CD4-positive, alpha-beta T cell (primary cell): ENCODE measurements at regions of chr12 and their contacts with region 1.

Region 1: DNA sequence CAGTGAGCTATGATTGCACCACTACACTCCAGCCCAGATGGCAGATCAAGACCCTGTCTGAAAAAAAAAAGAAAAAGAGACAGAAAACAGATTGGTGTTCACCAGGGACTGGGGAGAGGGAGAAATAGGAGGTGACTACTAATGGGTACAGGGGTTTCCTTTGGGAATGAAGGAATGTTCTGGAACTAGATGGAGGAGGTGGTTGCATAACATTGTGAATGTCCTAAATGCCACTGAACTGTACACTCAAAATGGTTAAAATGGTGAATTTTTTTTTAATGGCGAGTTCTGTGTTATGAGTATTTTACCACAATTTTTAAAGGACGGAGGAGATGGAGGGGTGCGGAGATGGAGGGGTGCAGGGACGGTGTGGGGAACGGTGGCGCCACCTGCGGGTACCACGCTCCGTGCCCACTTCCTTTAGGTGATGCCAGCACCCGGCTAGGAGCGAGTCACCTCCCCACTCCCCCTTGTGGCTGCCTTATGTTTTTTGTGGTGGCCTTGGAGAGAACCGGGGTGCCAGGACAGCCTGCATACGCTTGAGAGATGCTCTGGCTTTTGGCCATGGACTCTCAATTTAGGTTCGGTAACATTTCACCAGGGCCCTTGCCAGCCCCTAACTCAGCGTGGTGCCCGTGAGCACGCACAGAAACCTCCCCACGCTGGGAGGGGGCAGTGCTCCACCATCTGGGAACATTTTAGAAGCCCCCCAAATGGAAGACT is 16.1 kb downstream of the UBC start:
- DNase-seq: peak; percentile 49 to 89 (median 66)
- ATAC-seq: peak; percentile 100
- H3K4me3 ChIP-seq: no peak overlapping the region
- H3K4me3 Mint-ChIP-seq: peak overlapping the region; percentile 35
- H3K27ac ChIP-seq: no peak overlapping the region
- H3K27ac Mint-ChIP-seq: no peak overlapping the region
- H3K4me1 ChIP-seq: peaks cover 5% of the 10 kb centered on the region
- H3K4me1 Mint-ChIP-seq: peaks cover 12% of the 10 kb centered on the region
- H3K27me3 ChIP-seq: no peaks in the 10 kb centered on the region
- H3K27me3 Mint-ChIP-seq: no peaks in the 10 kb centered on the region
- CTCF ChIP-seq: peak; percentile 80

Region 2: DNA sequence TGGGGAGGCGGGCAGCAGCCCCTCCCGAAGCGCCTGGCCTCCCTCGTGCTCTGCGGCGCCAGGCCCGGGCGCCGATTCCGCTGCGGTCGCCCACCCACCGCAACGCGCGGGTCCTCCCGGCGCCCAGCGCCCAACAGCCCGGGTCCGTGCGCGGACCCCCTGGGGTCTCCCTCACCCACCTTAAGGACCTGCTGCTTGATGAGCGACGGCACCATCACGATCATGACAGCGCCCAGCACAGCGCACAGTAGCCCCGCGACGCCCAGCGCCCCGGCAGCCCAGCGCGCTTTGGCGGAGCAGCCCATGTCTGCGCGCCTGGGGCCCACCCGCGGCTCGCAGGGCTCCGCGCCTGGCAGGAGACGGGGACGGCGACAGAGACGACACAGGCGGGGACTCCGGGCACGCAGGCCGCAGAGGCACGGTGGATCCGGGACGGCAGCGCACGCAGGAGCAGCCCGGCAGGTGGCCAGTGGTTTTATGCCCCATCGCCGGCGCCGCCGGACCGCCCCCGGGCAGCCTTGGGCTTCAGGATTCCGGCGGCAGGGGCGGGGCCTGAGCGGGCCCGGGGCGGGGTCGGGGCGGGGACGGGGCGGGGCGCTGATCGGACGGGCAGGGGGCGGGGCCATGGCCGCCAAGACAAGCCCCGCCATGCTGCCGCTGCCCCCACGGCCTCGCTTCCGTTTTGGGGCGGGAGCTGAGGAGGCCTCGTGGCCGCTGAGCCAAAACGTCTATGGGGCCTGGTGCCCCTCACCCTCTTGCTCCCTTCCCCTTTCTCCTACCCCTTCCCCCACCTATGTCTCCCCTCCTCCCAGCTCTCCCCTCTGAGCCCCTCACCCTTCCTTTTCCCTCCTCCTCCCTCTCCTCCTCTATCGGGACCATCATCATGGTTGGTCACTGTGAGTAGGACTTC is 34.7 kb before region 1 on chr12 and contains the start of gene SCARB1:
- CTCF ChIA-PET with region 1: no interaction called
- POLR2A ChIA-PET with region 1: no interaction called
- intact Hi-C with region 1: loop called in 1 of 2 experiments (anchors 2 kb)
- DNase-seq: peak; percentile 53 to 88 (median 71)
- ATAC-seq: peak; percentile 89
- H3K4me3 ChIP-seq: peak within 1 kb of the TSS; percentile 51
- H3K4me3 Mint-ChIP-seq: peak within 1 kb of the TSS; percentile 91
- H3K27ac ChIP-seq: no peak within 1 kb of the TSS
- H3K27ac Mint-ChIP-seq: peak within 1 kb of the TSS; percentile 76
- H3K4me1 ChIP-seq: peaks cover 18% of the 10 kb centered on the region
- H3K4me1 Mint-ChIP-seq: peaks cover 20% of the 10 kb centered on the region
- H3K27me3 ChIP-seq: no peaks in the 10 kb centered on the region
- H3K27me3 Mint-ChIP-seq: no peaks in the 10 kb centered on the region
- CTCF ChIP-seq: no peak
- total RNA-seq, gene SCARB1: 2.3 to 3.7 TPM